ENCODE measurements at regions of chr22 and their contacts with region 1.

Region 1: DNA sequence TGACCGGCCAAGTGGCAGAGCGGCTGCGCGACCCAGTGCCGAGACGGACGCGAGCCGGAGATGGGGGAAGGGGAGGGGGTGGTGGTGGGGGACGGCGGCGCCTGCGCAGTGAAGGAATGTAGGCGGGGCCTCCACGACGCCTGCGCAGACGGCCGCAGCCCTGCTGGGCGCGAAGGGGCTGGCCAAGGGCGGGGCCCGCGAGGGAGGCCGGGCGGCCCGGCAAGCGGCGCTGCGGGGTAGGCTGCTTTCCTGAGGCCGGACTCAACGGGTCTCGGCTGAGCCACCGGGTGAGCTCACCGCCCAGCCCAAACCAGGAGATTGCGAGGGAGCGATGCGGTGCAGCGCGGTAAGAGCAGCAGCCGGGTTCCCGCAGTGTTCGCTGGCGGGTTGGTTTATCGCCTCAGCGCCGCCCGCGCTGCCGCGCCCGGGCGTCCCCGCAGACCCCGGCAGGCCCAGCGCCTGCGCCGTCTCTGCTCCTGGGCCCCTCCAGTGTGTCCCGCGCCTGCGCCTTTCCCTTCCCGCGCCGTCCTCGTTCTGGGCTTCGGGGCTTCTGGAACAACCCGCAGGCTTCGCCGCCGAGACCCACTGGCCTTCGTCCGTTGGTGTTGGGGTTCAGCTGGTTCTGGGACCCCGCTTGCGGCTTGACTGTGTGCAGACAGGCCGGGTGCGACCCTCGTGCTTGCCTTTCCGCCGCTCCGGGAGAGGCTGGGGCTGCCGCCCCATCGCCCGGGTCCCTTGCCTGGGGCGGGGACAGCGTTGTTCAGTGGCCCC is at the start of gene SPECC1L:
- DNase-seq: peak; percentile 97
- ATAC-seq: peak; percentile 95 to 97 (median 96)
- H3K4me3 ChIP-seq: peak within 1 kb of the TSS; percentile 89
- H3K27ac ChIP-seq: peak within 1 kb of the TSS; percentile 97
- H3K4me1 ChIP-seq: peaks cover 37% of the 10 kb centered on the region
- H3K27me3 ChIP-seq: no peaks in the 10 kb centered on the region
- CTCF ChIP-seq: peak; percentile 17
- total RNA-seq, gene SPECC1L: 23.6 to 29.9 (median 28.5) TPM

Region 2: GRCh38 chr22:23743303-23743705 is 527.5 kb before region 1 on chr22:
- intact Hi-C with region 1: loop called in 1 of 2 experiments (anchors 5 kb)
- DNase-seq: peak; percentile 66 to 90
- ATAC-seq: peak; percentile 43 to 67 (median 59)
- H3K4me3 ChIP-seq: no peak overlapping the region
- H3K27ac ChIP-seq: peak overlapping the region; percentile 87
- H3K4me1 ChIP-seq: peaks cover 17% of the 10 kb centered on the region
- H3K27me3 ChIP-seq: no peaks in the 10 kb centered on the region
- CTCF ChIP-seq: no peak

Region 3: DNA sequence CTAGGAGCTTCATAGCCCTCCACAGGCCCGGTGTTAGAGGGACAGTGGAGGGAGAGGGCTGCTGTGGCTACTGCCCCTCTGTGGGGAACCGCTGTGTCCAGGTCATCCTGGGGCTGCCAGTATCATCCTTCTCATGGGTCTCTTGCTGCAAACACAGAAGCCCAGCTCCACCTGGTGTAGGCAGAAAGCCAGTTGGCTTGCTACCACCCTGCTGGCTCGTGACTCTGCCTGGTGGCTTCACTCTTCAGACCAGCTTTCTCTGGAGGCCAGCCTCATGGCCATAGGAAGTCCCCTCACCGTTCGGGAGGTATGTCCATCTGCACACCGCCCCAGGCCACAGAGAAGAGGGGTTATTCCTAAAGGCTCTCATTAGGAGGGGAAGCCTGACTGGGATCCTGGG is 108.9 kb before region 1 on chr22:
- intact Hi-C with region 1: no loop called
- DNase-seq: peak in 1 of 2 donors; percentile 51
- ATAC-seq: peak; percentile 63 to 79 (median 72)
- H3K4me3 ChIP-seq: no peak overlapping the region
- H3K27ac ChIP-seq: no peak overlapping the region
- H3K4me1 ChIP-seq: peaks cover 14% of the 10 kb centered on the region
- H3K27me3 ChIP-seq: no peaks in the 10 kb centered on the region
- CTCF ChIP-seq: no peak

Region 4: GRCh38 chr22:24247011-24247507 is 23.8 kb before region 1 on chr22:
- intact Hi-C with region 1: no loop called
- DNase-seq: no peak
- ATAC-seq: peak in 3 of 4 donors; percentile 14 to 29 (median 18)
- H3K4me3 ChIP-seq: no peak overlapping the region
- H3K27ac ChIP-seq: peak overlapping the region; percentile 67
- H3K4me1 ChIP-seq: peaks cover 4% of the 10 kb centered on the region
- H3K27me3 ChIP-seq: no peaks in the 10 kb centered on the region
- CTCF ChIP-seq: no peak